Heart right ventricle (tissue), 16 donors: ENCODE measurements at regions of chr3 and their contacts with region 1.

Region 1: GRCh38 chr3:52154117-52155094 is at the start of gene POC1A:
- DNase-seq: peak; percentile 92 to 97
- ATAC-seq: peak; percentile 97 to 99 (median 98)
- H3K4me3 ChIP-seq: peak within 1 kb of the TSS; percentile 49 to 77 (median 66)
- H3K27ac ChIP-seq: peak within 1 kb of the TSS; percentile 64 to 94 (median 88)
- H3K4me1 ChIP-seq: peaks cover 4 to 19% (median 10%) of the 10 kb centered on the region in 9 donors
- H3K27me3 ChIP-seq: no peaks in the 10 kb centered on the region
- CTCF ChIP-seq: peak in 4 of 9 donors; percentile 12 to 22 (median 16)
- total RNA-seq, gene POC1A: 0.60 to 3.5 (median 1.1) TPM

Region 2: GRCh38 chr3:52190294-52191074 is 36.1 kb after region 1 on chr3:
- intact Hi-C with region 1: loop called in 5 of 10 experiments (anchors 5 kb)
- DNase-seq: peak; percentile 23 to 41
- ATAC-seq: peak; percentile 11 to 48 (median 20)
- H3K4me3 ChIP-seq: no peak overlapping the region
- H3K27ac ChIP-seq: peak overlapping the region in 4 of 10 donors; percentile 51 to 65 (median 57)
- H3K4me1 ChIP-seq: peaks cover 5 to 50% (median 26%) of the 10 kb centered on the region in 9 donors
- H3K27me3 ChIP-seq: no peaks in the 10 kb centered on the region
- CTCF ChIP-seq: no peak

Region 3: DNA sequence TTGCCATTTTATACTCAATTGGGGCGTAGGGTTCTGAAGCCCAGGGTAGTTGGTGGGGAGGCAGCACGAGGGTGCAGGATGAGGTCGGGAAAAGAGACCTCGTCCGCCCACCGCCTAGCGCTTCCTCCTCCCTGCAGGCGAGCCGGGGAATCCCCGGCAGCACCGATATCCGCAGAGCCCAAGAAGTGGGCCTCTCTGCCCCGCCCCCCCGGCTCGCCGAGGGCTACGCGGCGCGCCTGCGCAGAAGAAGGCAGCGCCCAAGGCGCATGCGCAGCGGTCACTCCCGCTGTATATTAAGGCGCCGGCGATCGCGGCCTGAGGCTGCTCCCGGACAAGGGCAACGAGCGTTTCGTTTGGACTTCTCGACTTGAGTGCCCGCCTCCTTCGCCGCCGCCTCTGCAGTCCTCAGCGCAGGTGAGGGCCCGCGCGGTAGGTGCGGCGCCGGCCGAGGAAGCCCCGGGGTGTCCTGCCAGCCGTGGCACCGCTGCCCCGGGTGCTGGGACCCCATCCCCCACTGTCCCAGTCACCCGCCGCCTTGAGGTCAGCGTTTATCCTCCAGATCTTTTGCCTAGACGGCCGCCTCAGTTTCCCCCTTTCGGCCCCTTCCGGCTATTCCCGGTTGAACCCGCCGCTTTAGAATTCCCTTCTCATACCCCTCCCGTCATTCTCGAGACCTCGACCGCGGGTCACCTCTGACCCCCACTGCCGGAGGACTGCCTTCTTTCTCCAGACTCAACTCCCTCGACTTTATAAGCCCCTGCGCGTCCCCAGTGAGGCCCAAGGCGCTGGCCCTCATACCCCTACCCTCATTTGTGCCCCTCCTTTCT is 43.6 kb after region 1 on chr3 and contains the start of gene ALAS1:
- intact Hi-C with region 1: loop called in 6 of 10 experiments (anchors 5 to 10 kb)
- DNase-seq: peak; percentile 92 to 95
- ATAC-seq: peak; percentile 84 to 94 (median 93)
- H3K4me3 ChIP-seq: peak within 1 kb of the TSS; percentile 76 to 100 (median 90)
- H3K27ac ChIP-seq: peak within 1 kb of the TSS; percentile 78 to 96 (median 92)
- H3K4me1 ChIP-seq: peaks cover 16 to 84% (median 72%) of the 10 kb centered on the region in 9 donors
- H3K27me3 ChIP-seq: no peaks in the 10 kb centered on the region
- CTCF ChIP-seq: peak in 5 of 9 donors; percentile 8 to 34 (median 29)
- total RNA-seq, gene ALAS1: 117 to 233 (median 177) TPM

Region 4: DNA sequence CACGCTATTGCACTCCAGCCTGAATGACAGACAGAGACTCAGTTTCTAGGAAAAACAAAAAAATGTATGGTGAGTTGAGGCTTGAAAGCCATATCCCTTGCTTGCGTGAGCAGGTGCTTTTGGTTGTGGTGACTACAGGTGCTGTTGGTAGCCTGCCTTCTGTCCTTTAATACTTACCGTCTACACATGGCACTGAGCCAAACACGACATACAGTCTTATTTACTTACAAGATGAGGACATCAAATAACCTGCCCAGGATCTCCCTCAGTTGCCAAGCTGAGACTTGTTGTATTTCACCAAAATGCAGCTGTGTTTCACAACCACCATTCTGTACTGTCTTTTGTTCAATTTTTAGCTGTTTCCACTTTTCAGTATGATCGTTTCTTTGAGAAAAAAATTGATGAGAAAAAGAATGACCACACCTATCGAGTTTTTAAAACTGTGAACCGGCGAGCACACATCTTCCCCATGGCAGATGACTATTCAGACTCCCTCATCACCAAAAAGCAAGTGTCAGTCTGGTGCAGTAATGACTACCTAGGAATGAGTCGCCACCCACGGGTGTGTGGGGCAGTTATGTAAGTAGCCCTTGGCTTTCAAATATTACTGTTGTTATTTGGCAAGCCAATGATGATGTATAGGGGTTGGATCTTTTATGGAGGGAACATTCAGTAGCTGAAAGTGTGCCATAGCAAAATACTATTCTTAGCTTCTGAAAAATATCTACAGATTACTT is 50.1 kb after region 1 on chr3:
- intact Hi-C with region 1: loop called in 5 of 10 experiments (anchors 5 to 10 kb)
- DNase-seq: no peak
- ATAC-seq: no peak
- H3K4me3 ChIP-seq: no peak overlapping the region
- H3K27ac ChIP-seq: no peak overlapping the region
- H3K4me1 ChIP-seq: peaks cover 3 to 51% (median 37%) of the 10 kb centered on the region in 9 donors
- H3K27me3 ChIP-seq: no peaks in the 10 kb centered on the region
- CTCF ChIP-seq: no peak

Region 5: GRCh38 chr3:52220380-52221026 is 66.1 kb after region 1 on chr3:
- intact Hi-C with region 1: loop called in 2 of 10 experiments (anchors 5 to 10 kb)
- DNase-seq: peak; percentile 87 to 88
- ATAC-seq: peak; percentile 50 to 65 (median 56)
- H3K4me3 ChIP-seq: no peak overlapping the region
- H3K27ac ChIP-seq: peak overlapping the region in 3 of 10 donors; percentile 13 to 24 (median 21)
- H3K4me1 ChIP-seq: peaks cover 17 to 68% (median 62%) of the 10 kb centered on the region in 9 donors
- H3K27me3 ChIP-seq: no peaks in the 10 kb centered on the region
- CTCF ChIP-seq: peak; percentile 87 to 94 (median 92)

Region 6: DNA sequence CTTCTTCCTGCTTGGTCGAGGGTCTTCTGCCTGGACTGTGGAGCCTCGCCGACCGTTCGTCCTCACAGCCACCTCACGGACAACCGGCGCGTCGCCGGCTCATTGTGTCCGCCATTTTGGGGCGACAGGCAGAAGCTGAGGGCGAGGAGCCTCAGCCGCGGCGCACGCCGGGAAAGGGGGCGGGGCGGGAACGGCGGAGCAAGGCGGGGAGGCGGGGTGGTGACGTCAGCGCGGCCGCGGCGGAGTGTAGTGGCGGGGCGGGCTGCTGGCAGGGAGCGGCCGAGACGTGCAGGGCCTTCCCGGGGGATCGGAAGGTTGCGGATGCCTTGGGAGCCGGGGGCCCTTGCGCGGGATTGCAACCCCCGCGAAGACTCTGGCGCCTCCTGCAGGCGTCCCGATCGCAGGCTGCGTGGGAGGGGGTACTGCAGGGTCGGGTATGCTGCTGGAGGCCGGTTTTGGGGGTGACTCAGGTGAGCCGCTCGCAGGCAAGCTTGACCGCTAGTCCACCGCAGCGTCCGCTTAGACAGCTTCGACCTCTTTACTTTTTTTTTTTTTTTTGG is 124.2 kb after region 1 on chr3 and contains the start of gene WDR82:
- intact Hi-C with region 1: loop called in 1 of 10 experiments (anchors 5 kb)
- DNase-seq: peak; percentile 97 to 99
- ATAC-seq: peak; percentile 95 to 97 (median 97)
- H3K4me3 ChIP-seq: peak within 1 kb of the TSS; percentile 58 to 95 (median 87)
- H3K27ac ChIP-seq: peak within 1 kb of the TSS; percentile 91 to 100 (median 97)
- H3K4me1 ChIP-seq: peaks cover 3 to 73% (median 57%) of the 10 kb centered on the region in 9 donors
- H3K27me3 ChIP-seq: no peaks in the 10 kb centered on the region
- CTCF ChIP-seq: peak in 8 of 9 donors; percentile 27 to 74 (median 63)
- total RNA-seq, gene WDR82: 59.0 to 78.4 (median 71.6) TPM